Transverse colon (tissue), 4 donors: ENCODE measurements at regions of chr4 and their contacts with region 1.

Region 1: GRCh38 chr4:41487868-41488440 is 50.0 kb upstream of the LIMCH1 start:
- DNase-seq: no peak
- H3K4me3 ChIP-seq: no peak overlapping the region
- H3K27ac ChIP-seq: no peak overlapping the region
- H3K4me1 ChIP-seq: no peaks in the 10 kb centered on the region
- H3K27me3 ChIP-seq: no peaks in the 10 kb centered on the region
- CTCF ChIP-seq: no peak
- EP300 ChIP-seq: no peak
- POLR2A ChIP-seq: no peak

Region 2: GRCh38 chr4:41432881-41433280 is 55.1 kb before region 1 on chr4:
- in situ Hi-C with region 1: no loop called
- intact Hi-C with region 1: no loop called
- DNase-seq: no peak
- H3K4me3 ChIP-seq: no peak overlapping the region
- H3K27ac ChIP-seq: no peak overlapping the region
- H3K4me1 ChIP-seq: peaks cover 0 to 9% (median 3%) of the 10 kb centered on the region in 4 donors
- H3K27me3 ChIP-seq: no peaks in the 10 kb centered on the region
- CTCF ChIP-seq: no peak
- EP300 ChIP-seq: no peak
- POLR2A ChIP-seq: no peak

Region 3: DNA sequence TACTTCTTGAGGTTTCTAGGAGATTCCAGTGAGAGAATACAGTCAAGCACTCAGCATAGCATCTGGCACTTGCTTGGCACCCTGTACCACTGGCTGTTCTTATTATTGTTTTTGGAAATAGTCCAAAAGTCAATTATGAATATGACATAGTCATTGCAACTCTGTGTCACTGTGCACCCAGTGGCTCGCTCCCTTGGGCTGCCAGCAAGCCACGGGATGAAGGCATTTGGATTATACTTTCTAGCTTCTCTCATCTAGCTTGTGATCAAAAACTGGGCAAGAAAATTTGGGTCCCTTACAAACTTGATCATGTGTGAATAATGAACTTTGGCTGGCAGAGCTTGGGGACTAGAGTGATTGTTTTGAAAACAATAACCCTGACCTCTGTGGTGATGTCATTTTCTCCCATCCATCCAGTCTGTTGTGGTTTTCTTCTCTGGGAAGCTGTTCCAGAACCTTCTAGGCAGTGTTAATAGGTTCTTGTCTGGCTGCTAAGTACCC is 17.3 kb after region 1 on chr4:
- in situ Hi-C with region 1: no loop called
- intact Hi-C with region 1: loop called (anchors 1 kb)
- DNase-seq: no peak
- H3K4me3 ChIP-seq: no peak overlapping the region
- H3K27ac ChIP-seq: no peak overlapping the region
- H3K4me1 ChIP-seq: no peaks in the 10 kb centered on the region
- H3K27me3 ChIP-seq: no peaks in the 10 kb centered on the region
- CTCF ChIP-seq: no peak
- EP300 ChIP-seq: no peak
- POLR2A ChIP-seq: no peak

Region 4: GRCh38 chr4:42066402-42066801 is 578.4 kb after region 1 on chr4:
- in situ Hi-C with region 1: no loop called
- intact Hi-C with region 1: no loop called
- DNase-seq: no peak
- H3K4me3 ChIP-seq: no peak overlapping the region
- H3K27ac ChIP-seq: no peak overlapping the region
- H3K4me1 ChIP-seq: no peaks in the 10 kb centered on the region
- H3K27me3 ChIP-seq: no peaks in the 10 kb centered on the region
- CTCF ChIP-seq: no peak
- EP300 ChIP-seq: no peak
- POLR2A ChIP-seq: no peak